Activated T-helper 2 cell treated with anti-CD3 and anti-CD28 coated beads, Interferon-gamma antibody, Interleukin-2, Interleukin-4, amounts not matched to agents 10 μg/mL and 5 μg/mL and 100 μg/mL, durations not matched to agents 14 hours and 24 hours and 36 hours (primary cell): ENCODE measurements at regions of chr12 and their contacts with region 1.

Region 1: DNA sequence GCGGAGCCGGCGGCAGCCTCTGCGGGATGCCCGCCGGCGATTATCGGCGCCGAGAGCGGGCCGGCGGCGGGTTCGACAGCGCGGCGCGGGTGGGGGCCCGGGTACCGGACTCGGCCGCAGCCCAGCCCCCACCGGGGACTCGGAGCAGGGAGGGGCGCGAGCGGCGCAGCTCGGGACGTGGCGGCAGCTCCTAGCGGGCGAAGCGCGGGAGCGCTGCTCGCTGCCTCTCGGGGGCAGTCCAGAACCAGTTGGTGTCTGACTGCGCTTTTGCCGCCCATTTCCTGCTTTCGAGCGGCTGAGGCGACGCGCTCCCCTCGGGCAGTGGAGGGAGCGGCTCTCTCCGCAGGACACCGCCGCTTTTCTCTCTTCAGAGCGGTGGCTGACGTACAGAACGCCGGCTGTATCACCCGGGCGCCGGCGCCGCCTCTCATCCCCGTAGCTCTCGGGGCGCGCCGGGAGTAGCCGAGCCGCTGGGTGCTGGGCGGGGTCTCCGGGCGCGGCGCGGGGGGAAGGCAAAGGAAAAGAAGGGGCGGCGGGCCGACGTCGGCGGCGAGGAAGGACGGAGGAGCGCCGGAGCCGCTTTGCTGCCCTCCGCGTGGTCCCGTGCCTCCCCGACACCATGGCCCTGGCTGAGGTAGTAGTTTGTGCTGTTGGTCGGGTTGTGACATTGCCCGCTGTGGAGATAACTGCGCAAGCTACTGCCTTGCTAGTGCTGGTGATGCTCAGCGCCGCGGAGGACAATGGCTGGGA is 136.6 kb downstream of the MON2 start:
- DNase-seq: peak; percentile 80
- H3K4me3 Mint-ChIP-seq: peak overlapping the region; percentile 89
- H3K27ac Mint-ChIP-seq: peak overlapping the region; percentile 89
- H3K4me1 Mint-ChIP-seq: peaks cover 41% of the 10 kb centered on the region
- H3K27me3 Mint-ChIP-seq: no peaks in the 10 kb centered on the region

Region 2: DNA sequence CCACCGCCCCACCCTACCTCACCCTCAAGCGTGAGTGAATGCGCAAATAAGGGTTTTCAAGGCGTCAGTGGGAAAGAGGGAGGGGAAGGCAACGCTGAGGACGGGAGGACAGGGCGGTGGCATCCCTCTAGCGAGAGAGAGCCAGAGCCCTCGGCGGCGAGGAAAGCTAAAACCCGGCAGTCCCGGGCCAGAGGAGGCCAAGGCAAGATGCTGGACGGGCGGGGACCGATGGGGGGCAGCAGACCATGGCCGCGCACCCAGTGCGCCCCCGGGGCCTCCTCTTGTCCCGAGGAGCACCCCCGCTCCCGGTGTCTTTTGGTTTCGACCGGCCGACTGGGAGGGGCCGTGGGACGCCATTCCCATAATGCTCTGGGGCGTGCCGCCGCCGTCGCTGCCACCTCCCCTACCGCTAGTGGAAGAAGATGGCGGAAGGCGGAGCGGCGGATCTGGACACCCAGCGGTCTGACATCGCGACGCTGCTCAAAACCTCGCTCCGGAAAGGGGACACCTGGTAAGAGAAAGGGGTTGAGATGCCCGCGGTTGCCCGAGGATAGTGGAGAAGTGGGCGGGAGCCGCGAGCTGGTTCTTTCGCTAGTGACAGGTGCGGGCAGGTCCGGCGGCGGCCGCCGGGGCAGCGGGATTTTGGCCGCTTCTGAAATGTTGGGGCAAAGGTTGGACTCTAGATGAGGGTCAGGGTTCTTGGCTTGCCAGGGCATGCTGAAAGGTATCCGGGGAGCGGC is 343.1 kb before region 1 on chr12 and contains the start of gene USP15:
- intact Hi-C with region 1: loop called (anchors 1 kb)
- DNase-seq: peak; percentile 95
- H3K4me3 Mint-ChIP-seq: peak within 1 kb of the TSS; percentile 99
- H3K27ac Mint-ChIP-seq: peak within 1 kb of the TSS; percentile 93
- H3K4me1 Mint-ChIP-seq: peaks cover 53% of the 10 kb centered on the region
- H3K27me3 Mint-ChIP-seq: no peaks in the 10 kb centered on the region
- total RNA-seq, gene USP15: 82.4 and 91.1 TPM in 2 replicates

Region 3: GRCh38 chr12:62466594-62467491 is 136.4 kb before region 1 on chr12 and contains the start of gene MON2:
- intact Hi-C with region 1: loop called (anchors 2 kb)
- DNase-seq: peak; percentile 83
- H3K4me3 Mint-ChIP-seq: peak within 1 kb of the TSS; percentile 94
- H3K27ac Mint-ChIP-seq: peak within 1 kb of the TSS; percentile 91
- H3K4me1 Mint-ChIP-seq: peaks cover 20% of the 10 kb centered on the region
- H3K27me3 Mint-ChIP-seq: peaks cover 3% of the 10 kb centered on the region
- total RNA-seq, gene MON2: 33.0 and 37.6 TPM in 2 replicates

Region 4: DNA sequence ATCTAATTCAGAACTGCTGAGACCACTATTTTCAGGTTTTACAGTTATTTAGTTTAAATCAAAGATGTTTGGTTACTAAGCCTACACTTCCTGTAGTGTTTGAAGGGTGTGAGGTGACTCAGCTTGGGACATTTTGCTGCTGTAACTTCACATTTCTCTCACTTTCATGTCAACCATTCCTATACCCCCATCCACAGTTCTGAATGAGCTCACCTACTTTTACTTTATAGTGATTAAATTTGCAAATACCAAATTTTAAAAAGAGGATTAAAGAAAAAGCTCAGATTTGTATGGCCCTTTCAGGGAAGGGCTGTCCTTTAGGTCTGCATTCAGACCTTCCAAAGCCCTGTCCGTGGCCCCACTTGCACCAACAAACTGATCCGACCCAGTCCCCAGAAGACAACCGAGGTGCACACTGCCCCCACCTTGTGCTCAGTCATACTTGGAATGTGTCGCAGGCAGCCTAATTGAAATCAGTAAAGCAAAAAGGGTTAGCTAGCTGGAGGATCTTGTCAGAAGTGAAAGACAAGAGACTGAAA is 37.7 kb after region 1 on chr12:
- intact Hi-C with region 1: loop called (anchors 1 kb)
- DNase-seq: no peak
- H3K4me3 Mint-ChIP-seq: peak overlapping the region; percentile 1
- H3K27ac Mint-ChIP-seq: peak overlapping the region; percentile 75
- H3K4me1 Mint-ChIP-seq: peaks cover 11% of the 10 kb centered on the region
- H3K27me3 Mint-ChIP-seq: peaks cover 17% of the 10 kb centered on the region

Region 5: DNA sequence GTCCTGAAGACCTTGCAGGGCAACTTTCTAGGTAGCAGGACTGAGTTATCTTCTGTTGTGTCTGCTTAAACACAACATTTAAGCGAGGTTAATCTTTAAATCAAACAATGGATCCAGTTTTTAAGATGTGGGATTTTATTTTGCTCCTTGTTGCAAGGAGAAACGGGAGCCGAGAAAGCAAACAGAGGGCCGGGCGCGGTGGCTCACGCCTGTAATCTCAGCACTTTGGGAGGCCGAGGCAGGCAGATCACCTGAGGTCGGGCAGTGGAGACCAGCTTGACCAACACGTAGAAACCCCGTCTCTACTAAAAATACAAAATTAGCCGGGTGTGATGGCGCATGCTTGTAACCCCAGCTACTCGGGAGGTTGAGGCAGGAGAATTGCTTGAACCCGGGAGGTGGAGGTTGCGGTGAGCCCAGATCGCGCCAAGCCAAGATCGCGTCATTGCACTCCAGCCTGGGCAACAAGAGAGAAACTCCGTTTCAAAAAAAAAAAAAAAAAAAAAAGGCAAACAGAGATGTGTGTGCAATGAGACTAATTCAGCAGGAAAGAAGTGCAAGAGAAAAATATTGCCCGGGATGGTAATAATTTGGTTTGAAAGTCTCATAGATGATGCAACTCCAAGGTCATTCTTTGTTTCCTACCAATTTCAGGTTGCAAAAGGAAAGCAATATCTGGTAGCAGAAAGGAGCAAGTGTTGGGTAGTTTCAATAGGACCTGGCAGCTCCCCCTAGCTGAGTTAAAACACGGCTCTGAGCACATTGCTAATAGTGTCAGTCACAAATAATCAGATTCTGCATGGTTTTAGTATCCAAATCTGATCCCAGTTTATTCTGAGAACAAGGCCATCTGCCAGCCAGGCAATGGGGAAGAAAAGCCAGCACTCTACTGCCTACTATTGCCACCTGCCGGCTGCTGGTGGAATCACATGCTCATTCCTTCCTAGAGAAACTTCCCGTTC is 190.3 kb after region 1 on chr12:
- intact Hi-C with region 1: loop called (anchors 1 kb)
- DNase-seq: peak; percentile 50
- H3K4me3 Mint-ChIP-seq: no peak overlapping the region
- H3K27ac Mint-ChIP-seq: no peak overlapping the region
- H3K4me1 Mint-ChIP-seq: peaks cover 3% of the 10 kb centered on the region
- H3K27me3 Mint-ChIP-seq: peaks cover 35% of the 10 kb centered on the region